ENCODE measurements at regions of chr19 and their contacts with region 1.

Region 1: DNA sequence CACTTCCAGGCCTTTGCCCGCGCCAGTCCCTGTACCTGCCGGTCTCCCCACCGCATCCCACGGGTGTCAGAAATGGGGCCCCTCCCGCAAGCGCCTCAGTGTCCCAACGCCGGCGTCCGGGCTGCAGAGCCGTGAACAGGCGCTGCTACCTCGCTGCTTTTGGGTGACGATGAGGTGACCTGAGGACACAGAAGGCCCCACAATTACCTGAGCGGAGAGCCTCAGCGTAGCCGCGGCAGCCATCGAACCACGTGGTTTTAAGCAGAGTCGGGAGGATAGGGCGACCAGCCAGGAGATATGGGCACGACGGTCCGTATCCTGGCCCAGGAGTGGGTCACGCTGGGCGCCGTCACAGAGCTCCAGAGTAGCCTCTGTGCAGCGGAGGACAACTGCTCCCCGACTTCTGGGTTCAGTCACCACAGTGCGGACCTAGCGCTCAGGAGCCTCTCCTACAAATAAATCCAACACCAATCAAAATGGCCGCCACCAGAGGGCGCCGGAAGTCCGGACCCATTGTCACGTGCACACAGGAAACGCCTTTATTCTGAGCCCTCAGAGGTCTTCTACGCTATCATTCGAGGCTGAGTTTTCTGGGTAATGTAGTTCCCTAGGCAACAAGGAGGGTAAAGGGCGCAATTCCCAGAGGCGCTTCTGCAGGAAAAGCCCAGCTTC is at the start of gene ZNF814:
- DNase-seq: peak; percentile 66 to 87 (median 81)
- ATAC-seq: peak; percentile 93
- H3K4me3 ChIP-seq: peak within 1 kb of the TSS; percentile 73 to 83
- H3K4me3 Mint-ChIP-seq: peak within 1 kb of the TSS; percentile 93
- H3K27ac ChIP-seq: peak within 1 kb of the TSS; percentile 66 to 68
- H3K27ac Mint-ChIP-seq: peak within 1 kb of the TSS; percentile 87
- H3K4me1 ChIP-seq: peaks cover 3% of the 10 kb centered on the region
- H3K4me1 Mint-ChIP-seq: peaks cover 39% of the 10 kb centered on the region
- H3K27me3 ChIP-seq: no peaks in the 10 kb centered on the region
- H3K27me3 Mint-ChIP-seq: no peaks in the 10 kb centered on the region
- CTCF ChIP-seq: peak; percentile 19
- total RNA-seq, gene ZNF814: 43.9 to 48.2 TPM

Region 2: GRCh38 chr19:57746580-57747471 is 141.9 kb before region 1 on chr19 and contains the start of gene ZNF776:
- CTCF ChIA-PET with region 1: no interaction called
- POLR2A ChIA-PET with region 1: no interaction called
- intact Hi-C with region 1: loop called in 1 of 2 experiments (anchors 1 kb)
- DNase-seq: peak; percentile 63 to 93 (median 84)
- ATAC-seq: peak; percentile 96
- H3K4me3 ChIP-seq: peak within 1 kb of the TSS; percentile 75 to 84
- H3K4me3 Mint-ChIP-seq: peak within 1 kb of the TSS; percentile 95
- H3K27ac ChIP-seq: peak within 1 kb of the TSS; percentile 71 to 80
- H3K27ac Mint-ChIP-seq: peak within 1 kb of the TSS; percentile 98
- H3K4me1 ChIP-seq: peaks cover 16% of the 10 kb centered on the region
- H3K4me1 Mint-ChIP-seq: peaks cover 41% of the 10 kb centered on the region
- H3K27me3 ChIP-seq: no peaks in the 10 kb centered on the region
- H3K27me3 Mint-ChIP-seq: no peaks in the 10 kb centered on the region
- CTCF ChIP-seq: no peak
- total RNA-seq, gene ZNF776: 22.3 to 32.3 TPM

Region 3: GRCh38 chr19:57769345-57770131 is 119.2 kb before region 1 on chr19 and contains the start of gene ZNF586:
- CTCF ChIA-PET with region 1: no interaction called
- POLR2A ChIA-PET with region 1: no interaction called
- intact Hi-C with region 1: loop called in 1 of 2 experiments (anchors 1 kb)
- DNase-seq: peak; percentile 64 to 94 (median 86)
- ATAC-seq: peak; percentile 99
- H3K4me3 ChIP-seq: peak within 1 kb of the TSS; percentile 73 to 90
- H3K4me3 Mint-ChIP-seq: peak within 1 kb of the TSS; percentile 94
- H3K27ac ChIP-seq: peak within 1 kb of the TSS; percentile 61 to 86
- H3K27ac Mint-ChIP-seq: peak within 1 kb of the TSS; percentile 97
- H3K4me1 ChIP-seq: peaks cover 17% of the 10 kb centered on the region
- H3K4me1 Mint-ChIP-seq: peaks cover 35% of the 10 kb centered on the region
- H3K27me3 ChIP-seq: no peaks in the 10 kb centered on the region
- H3K27me3 Mint-ChIP-seq: no peaks in the 10 kb centered on the region
- CTCF ChIP-seq: no peak
- total RNA-seq, gene ZNF586: 54.0 to 57.6 TPM

Region 4: DNA sequence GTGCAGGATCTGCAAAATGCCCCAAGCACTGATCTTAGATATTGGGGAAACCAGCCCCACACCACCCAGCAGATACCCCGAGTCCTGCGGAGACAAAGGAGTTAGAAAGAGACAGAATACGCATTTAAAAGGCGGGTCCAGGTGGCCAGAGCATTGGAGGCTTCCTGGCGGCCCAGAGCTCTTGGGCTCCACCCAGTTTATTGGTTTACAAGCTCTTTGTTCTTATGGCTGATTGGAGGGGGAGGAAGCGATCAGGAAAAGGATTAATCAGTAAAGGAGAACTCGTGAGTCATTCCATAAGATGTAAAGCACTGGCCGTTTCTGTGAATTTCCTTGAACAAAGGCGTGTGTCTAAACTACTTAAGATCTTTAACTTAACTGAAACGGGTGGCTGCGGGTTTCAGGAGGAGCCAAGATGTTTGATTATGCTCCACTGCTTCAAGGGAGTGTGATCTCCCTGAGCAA is 38.1 kb before region 1 on chr19:
- CTCF ChIA-PET with region 1: no interaction called
- POLR2A ChIA-PET with region 1: interaction called, 3 read pairs
- intact Hi-C with region 1: loop called (anchors 1 to 2 kb)
- DNase-seq: peak in 2 of 9 experiments; percentile 8 to 12
- ATAC-seq: no peak
- H3K4me3 ChIP-seq: peak overlapping the region; percentile 68 to 85
- H3K4me3 Mint-ChIP-seq: peak overlapping the region; percentile 93
- H3K27ac ChIP-seq: peak overlapping the region; percentile 78 to 82
- H3K27ac Mint-ChIP-seq: peak overlapping the region; percentile 96
- H3K4me1 ChIP-seq: peaks cover 16% of the 10 kb centered on the region
- H3K4me1 Mint-ChIP-seq: peaks cover 33% of the 10 kb centered on the region
- H3K27me3 ChIP-seq: no peaks in the 10 kb centered on the region
- H3K27me3 Mint-ChIP-seq: no peaks in the 10 kb centered on the region
- CTCF ChIP-seq: no peak

Region 5: GRCh38 chr19:57867868-57868492 is 20.7 kb before region 1 on chr19:
- CTCF ChIA-PET with region 1: no interaction called
- POLR2A ChIA-PET with region 1: no interaction called
- intact Hi-C with region 1: no loop called
- DNase-seq: no peak
- ATAC-seq: no peak
- H3K4me3 ChIP-seq: peak overlapping the region in 1 of 2 experiments; percentile 22
- H3K4me3 Mint-ChIP-seq: no peak overlapping the region
- H3K27ac ChIP-seq: no peak overlapping the region
- H3K27ac Mint-ChIP-seq: no peak overlapping the region
- H3K4me1 ChIP-seq: no peaks in the 10 kb centered on the region
- H3K4me1 Mint-ChIP-seq: no peaks in the 10 kb centered on the region
- H3K27me3 ChIP-seq: no peaks in the 10 kb centered on the region
- H3K27me3 Mint-ChIP-seq: no peaks in the 10 kb centered on the region
- CTCF ChIP-seq: no peak

Region 6: DNA sequence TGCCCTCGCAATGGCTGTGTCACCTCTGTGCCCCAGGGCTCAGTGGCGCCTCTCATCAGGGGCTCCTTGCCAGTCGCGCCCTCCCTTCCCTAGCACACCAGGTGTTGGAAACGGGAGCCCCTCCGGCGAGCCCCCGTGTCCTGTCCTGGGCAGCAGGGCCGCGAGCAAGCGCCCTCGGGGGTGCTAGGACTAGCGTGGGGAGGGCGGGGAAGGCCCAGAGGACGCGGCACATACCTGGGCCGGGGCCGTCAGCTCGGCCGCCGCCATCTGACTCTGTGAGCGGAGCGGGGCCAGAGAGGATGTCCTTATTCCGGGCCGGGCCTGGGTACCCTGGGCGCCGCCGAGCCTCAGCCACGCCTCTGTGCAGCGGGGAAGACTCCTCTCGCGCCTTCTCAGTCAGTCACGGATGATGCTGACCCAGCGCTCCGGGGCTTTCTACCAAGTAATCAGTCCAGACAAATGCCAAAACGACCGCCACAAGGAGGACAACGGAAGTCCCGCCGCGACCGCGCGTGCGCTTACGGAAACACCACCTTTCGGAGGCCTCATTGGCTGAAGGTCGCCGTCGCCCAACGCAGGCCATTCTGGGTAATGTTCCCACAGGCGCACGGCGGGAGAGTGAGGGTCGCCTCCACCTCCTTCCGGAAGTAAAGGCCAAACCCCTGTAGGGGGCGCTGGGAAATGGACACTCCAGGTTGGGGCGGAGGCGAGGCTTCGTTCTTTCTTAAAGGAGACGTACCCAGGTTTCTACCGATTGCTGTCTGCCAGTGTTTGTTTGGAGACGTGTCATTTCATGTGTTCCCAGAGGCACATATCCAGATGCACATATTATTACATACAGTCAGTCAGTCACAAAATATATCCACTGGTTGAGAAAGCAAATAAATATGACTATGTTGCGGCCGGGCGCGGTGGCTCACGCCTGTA is 58.8 kb after region 1 on chr19 and contains the start of gene ZNF256:
- CTCF ChIA-PET with region 1: no interaction called
- POLR2A ChIA-PET with region 1: no interaction called
- intact Hi-C with region 1: loop called in 1 of 2 experiments (anchors 1 kb)
- DNase-seq: peak; percentile 72 to 92 (median 86)
- ATAC-seq: peak; percentile 91
- H3K4me3 ChIP-seq: peak within 1 kb of the TSS; percentile 93 to 97
- H3K4me3 Mint-ChIP-seq: peak within 1 kb of the TSS; percentile 93
- H3K27ac ChIP-seq: peak within 1 kb of the TSS; percentile 76 to 90
- H3K27ac Mint-ChIP-seq: peak within 1 kb of the TSS; percentile 95
- H3K4me1 ChIP-seq: peaks cover 16% of the 10 kb centered on the region
- H3K4me1 Mint-ChIP-seq: peaks cover 20% of the 10 kb centered on the region
- H3K27me3 ChIP-seq: no peaks in the 10 kb centered on the region
- H3K27me3 Mint-ChIP-seq: no peaks in the 10 kb centered on the region
- CTCF ChIP-seq: peak; percentile 44
- total RNA-seq, gene ZNF256: 18.3 to 21.0 TPM

Region 7: DNA sequence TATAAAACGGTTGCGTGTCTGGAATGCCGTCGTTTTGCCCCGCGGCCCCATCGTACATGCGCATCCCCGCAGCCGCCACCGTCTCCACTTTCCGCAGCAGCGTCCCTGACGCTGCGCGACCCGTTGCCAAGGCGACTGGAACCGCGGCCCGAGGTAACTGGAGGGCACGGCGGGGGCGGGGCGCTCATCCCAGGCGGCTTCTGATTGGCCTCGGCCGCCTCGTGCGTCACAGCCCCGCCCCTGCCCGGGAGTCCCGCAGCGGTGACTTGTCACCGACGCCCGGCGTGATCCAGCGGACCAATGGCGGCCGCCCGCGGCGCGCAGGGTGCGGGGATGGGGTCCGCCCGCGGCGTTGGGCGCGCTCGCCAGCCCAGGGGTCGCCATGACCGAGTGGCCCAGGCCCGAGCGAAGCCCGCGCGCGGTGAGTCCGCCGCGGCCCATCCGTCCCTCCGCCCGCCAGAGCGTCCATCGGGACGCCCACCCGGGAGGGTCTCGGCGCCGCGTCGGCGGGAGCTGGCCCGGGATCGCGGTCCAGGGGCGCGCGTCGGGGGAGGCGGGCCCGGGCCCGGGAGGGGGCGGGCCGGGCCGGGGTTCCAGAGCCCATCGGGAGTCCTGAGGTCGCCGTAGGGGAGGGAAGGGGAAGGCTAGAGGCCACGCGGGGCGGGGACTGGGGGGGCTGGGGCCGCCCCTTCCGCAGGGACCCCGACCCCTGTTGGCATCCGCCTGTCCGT is 145.2 kb after region 1 on chr19 and contains the start of gene ZSCAN1:
- CTCF ChIA-PET with region 1: no interaction called
- POLR2A ChIA-PET with region 1: no interaction called
- intact Hi-C with region 1: no loop called
- DNase-seq: peak in 7 of 9 experiments; percentile 13 to 57 (median 42)
- ATAC-seq: peak; percentile 72
- H3K4me3 ChIP-seq: no peak within 1 kb of the TSS
- H3K4me3 Mint-ChIP-seq: peak within 1 kb of the TSS; percentile 54
- H3K27ac ChIP-seq: no peak within 1 kb of the TSS
- H3K27ac Mint-ChIP-seq: no peak within 1 kb of the TSS
- H3K4me1 ChIP-seq: no peaks in the 10 kb centered on the region
- H3K4me1 Mint-ChIP-seq: peaks cover 2% of the 10 kb centered on the region
- H3K27me3 ChIP-seq: peaks cover 9 to 15% of the 10 kb centered on the region in 2 experiments
- H3K27me3 Mint-ChIP-seq: peaks cover 32% of the 10 kb centered on the region
- CTCF ChIP-seq: no peak
- total RNA-seq, gene ZSCAN1: not detected

Region 8: DNA sequence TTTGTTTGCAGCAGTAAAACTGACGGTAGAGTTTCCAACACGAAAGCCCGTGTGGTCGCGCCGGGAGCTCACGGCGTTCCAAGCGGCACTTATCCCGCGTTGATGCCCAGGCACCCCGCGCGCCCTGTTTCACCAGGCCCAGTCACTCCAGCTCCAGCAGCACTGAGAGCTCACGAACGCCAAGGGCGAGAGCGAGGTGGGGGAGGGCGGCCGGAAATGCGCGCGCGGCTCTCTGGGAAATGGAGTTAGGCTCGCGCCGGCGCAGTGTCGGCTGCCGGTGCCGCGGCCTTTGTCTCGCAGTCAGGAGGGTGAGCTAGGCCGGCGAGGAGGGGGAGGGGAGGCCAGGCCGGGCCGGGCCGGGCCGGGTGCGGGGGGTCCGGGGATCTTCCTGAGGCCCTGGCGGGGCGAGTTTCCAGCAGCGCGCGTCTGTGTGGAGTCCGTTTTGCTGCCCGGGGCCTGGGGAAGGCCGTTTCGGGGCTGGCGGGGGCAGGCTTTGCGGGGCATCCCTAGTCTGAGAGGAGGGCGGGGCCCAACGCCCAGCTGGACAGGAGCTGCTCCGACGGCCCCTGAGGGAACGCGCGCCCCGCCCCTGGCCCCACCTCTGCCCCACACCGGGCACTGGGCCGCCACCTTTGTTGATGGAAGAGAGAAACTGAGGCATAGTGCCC is 170.4 kb after region 1 on chr19 and contains the start of gene ZNF135:
- CTCF ChIA-PET with region 1: no interaction called
- POLR2A ChIA-PET with region 1: no interaction called
- intact Hi-C with region 1: no loop called
- DNase-seq: peak; percentile 32 to 79 (median 65)
- ATAC-seq: peak; percentile 95
- H3K4me3 ChIP-seq: peak within 1 kb of the TSS; percentile 44 to 48
- H3K4me3 Mint-ChIP-seq: peak within 1 kb of the TSS; percentile 82
- H3K27ac ChIP-seq: peak within 1 kb of the TSS; percentile 37 to 59
- H3K27ac Mint-ChIP-seq: peak within 1 kb of the TSS; percentile 90
- H3K4me1 ChIP-seq: no peaks in the 10 kb centered on the region
- H3K4me1 Mint-ChIP-seq: peaks cover 5% of the 10 kb centered on the region
- H3K27me3 ChIP-seq: peaks cover 0 to 6% of the 10 kb centered on the region in 2 experiments
- H3K27me3 Mint-ChIP-seq: peaks cover 16% of the 10 kb centered on the region
- CTCF ChIP-seq: no peak
- total RNA-seq, gene ZNF135: 1.2 to 1.4 TPM